Left cardiac atrium (tissue), 4 donors: ENCODE measurements at regions of chr13 and their contacts with region 1.

Region 1: GRCh38 chr13:99269627-99270241 is 11.6 kb upstream of the GPR18 start:
- DNase-seq: no peak
- ATAC-seq: peak; percentile 64 to 73

Region 2: DNA sequence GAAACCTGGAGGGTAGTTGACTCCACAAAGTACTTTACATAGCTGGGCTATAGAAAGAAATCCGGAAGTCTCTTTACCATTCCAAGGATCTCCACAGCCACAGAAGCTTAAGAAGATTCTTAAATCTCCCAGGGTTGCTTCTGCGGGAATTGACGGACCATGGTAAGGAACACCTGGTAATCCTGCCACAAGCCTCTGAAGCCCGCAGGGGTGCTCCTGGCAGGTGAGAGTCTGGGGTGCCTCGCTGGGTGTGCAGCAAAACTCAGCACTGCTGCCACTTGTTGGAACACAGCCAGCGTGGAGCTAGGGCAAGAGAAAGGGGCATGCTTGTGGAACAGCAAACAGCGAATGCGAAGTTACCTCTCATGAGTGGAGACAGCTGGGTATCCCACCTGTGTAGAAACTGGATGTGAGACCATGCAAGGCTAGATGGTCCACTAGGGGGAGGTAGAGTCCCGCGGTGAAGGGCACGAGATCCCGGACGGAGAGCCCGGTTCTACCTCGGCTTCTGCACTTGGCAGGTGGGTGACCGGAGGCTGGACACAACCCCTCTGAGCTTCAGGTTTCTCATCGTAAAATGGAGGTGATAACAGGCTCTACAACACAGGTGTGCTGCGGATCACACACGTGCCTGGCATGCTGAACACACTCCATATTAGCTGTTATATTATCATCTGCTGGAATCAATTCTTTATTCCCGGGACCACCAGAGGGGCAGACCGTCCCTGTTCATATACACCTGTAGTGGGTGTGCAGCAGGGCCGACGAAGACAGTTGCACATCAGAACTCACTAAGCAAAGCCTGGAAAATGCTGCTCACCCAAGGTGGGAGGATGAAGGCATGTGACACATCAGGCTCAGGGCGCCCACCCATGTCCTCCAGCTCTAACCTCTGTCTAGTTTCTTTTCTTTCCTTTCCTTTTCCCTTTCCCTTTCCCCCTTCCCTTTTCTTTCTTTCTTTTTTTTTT is 93.1 kb before region 1 on chr13:
- intact Hi-C with region 1: loop called (anchors 2 kb)
- DNase-seq: peak; percentile 76
- ATAC-seq: peak; percentile 92

Region 3: DNA sequence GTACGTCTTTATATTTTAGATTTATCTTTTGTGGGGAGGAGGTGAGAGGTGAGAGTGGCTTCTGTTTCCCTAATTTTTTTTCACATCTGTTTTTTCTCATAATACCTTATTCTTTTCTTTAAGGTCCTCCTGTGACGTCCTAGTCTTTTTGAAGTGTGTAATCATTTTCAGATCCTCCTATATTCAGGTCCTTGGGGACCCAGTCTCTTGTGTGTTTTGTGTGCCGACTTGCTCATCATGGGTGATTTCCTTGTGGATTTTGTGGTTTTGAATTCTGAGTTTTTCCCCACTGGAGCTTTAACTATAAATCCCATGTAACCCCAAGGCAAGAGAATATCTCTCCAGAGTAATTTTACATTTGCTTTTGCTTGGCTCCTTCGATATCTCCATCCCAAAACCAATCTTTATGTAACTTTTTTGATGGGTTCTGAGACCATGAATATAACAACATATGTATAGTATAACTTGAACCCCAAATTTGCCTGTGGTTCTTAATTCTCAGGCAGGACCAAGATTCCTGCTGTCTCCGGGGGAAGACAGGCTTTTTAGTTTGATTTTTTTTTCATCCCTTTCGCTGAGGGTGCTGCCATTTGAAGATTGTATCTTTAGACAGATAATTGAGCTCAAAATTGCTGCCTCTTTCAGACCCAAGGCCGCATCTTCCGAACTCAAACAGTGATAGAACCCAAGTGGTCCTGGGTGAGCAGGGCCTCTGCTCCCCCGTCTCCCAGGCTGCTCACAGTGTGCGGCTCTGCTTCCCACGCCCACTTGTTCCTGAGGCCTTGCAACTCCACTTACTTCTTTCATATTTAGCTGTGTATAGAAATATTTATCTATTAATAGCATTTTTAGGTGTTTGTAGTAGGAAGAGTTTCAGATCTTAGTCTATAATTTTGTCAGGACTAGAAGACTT is 96.6 kb after region 1 on chr13:
- intact Hi-C with region 1: loop called in 1 of 2 experiments (anchors 5 kb)
- DNase-seq: no peak
- ATAC-seq: no peak

Region 4: GRCh38 chr13:99812625-99813024 is 542.9 kb after region 1 on chr13:
- intact Hi-C with region 1: no loop called
- DNase-seq: no peak
- ATAC-seq: peak in 1 of 2 donors; percentile 27